Right cardiac atrium (tissue), 5 donors: ENCODE measurements at regions of chr3 and their contacts with region 1.

Region 1: DNA sequence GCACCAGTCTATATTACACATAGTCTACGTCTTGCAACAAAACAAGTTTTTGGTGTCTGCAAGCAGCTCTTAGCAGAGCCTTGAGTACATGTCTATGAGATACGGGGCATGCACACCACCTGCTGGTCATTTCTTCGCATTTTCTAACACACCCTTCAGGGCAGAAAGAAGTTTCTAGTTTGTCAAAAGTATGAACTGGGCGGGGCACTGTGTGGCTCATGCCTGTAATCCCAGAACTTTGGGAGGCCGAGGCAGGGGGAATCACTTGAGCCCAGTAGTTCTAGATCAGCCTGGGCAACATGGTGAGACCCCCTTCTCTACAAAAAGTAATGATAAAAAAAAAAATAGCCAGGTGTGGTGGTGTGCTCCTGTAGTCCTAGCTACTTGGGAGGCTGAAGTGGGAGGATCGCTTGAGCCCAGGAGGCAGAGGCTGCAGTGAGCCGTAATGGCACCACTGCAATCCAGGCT is 64.2 kb upstream of the ARL8B start:
- DNase-seq: peak; percentile 81 to 87 (median 83)
- ATAC-seq: peak; percentile 91 to 93
- H3K4me3 ChIP-seq: no peak overlapping the region
- H3K27ac ChIP-seq: no peak overlapping the region
- H3K4me1 ChIP-seq: no peaks in the 10 kb centered on the region
- H3K27me3 ChIP-seq: no peaks in the 10 kb centered on the region

Region 2: GRCh38 chr3:4656059-4656458 is 401.8 kb before region 1 on chr3:
- intact Hi-C with region 1: loop called in 2 of 4 experiments (anchors 5 kb)
- DNase-seq: peak; percentile 68 to 83 (median 76)
- ATAC-seq: peak; percentile 91 to 92
- H3K4me3 ChIP-seq: no peak overlapping the region
- H3K27ac ChIP-seq: no peak overlapping the region
- H3K4me1 ChIP-seq: no peaks in the 10 kb centered on the region
- H3K27me3 ChIP-seq: no peaks in the 10 kb centered on the region

Region 3: GRCh38 chr3:4712143-4712542 is 345.7 kb before region 1 on chr3:
- intact Hi-C with region 1: loop called (anchors 2 to 5 kb)
- DNase-seq: no peak
- ATAC-seq: peak in 1 of 2 donors; percentile 13
- H3K4me3 ChIP-seq: no peak overlapping the region
- H3K27ac ChIP-seq: no peak overlapping the region
- H3K4me1 ChIP-seq: no peaks in the 10 kb centered on the region
- H3K27me3 ChIP-seq: no peaks in the 10 kb centered on the region

Region 4: GRCh38 chr3:7038394-7038793 is 1980.5 kb after region 1 on chr3:
- intact Hi-C with region 1: no loop called
- DNase-seq: no peak
- ATAC-seq: no peak
- H3K4me3 ChIP-seq: no peak overlapping the region
- H3K27ac ChIP-seq: no peak overlapping the region
- H3K4me1 ChIP-seq: no peaks in the 10 kb centered on the region
- H3K27me3 ChIP-seq: no peaks in the 10 kb centered on the region